Spleen (tissue), 13 donors: ENCODE measurements at regions of chr1 and their contacts with region 1.

Region 1: DNA sequence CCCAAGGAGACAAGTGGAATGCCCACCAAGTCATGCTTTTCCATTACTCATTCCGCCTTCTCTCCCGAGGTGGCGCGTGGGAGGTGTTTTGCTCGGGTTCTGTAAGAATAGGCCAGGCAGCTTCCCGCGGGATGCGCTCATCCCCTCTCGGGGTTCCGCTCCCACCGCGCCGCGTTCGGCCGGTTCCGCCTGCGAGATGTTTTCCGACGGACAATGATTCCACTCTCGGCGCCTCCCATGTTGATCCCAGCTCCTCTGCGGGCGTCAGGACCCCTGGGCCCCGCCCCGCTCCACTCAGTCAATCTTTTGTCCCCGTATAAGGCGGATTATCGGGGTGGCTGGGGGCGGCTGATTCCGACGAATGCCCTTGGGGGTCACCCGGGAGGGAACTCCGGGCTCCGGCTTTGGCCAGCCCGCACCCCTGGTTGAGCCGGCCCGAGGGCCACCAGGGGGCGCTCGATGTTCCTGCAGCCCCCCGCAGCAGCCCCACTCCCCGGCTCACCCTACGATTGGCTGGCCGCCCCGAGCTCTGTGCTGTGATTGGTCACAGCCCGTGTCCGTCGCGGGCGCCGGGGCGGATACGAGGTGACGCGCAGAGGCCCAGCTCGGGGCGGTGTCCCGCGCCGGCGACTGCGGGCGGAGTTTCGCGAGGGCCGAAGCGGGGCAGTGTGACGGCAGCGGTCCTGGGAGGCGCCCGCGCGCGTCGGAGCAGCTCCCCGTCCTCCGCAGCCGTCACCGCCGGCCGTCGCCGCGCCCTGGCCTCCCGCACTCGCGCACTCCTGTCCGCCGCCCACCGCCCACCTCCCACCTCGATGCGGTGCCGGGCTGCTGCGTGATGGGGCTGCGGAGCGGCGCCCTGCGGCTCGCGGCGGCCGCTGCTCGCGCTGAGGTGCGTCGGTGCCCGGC is at the start of gene KIF1B:
- DNase-seq: peak; percentile 98
- H3K4me3 ChIP-seq: peak within 1 kb of the TSS; percentile 53 to 81 (median 70)
- H3K27ac ChIP-seq: peak within 1 kb of the TSS; percentile 87 to 98 (median 95)
- H3K4me1 ChIP-seq: peaks cover 6 to 52% (median 33%) of the 10 kb centered on the region in 6 donors
- H3K27me3 ChIP-seq: peaks cover 0 to 6% (median 0%) of the 10 kb centered on the region in 7 donors
- CTCF ChIP-seq: peak; percentile 93 to 100 (median 99)
- POLR2A ChIP-seq: peak in 2 of 3 donors; percentile 71 to 95
- total RNA-seq, gene KIF1B: 29.9 to 53.5 (median 37.4) TPM

Region 2: DNA sequence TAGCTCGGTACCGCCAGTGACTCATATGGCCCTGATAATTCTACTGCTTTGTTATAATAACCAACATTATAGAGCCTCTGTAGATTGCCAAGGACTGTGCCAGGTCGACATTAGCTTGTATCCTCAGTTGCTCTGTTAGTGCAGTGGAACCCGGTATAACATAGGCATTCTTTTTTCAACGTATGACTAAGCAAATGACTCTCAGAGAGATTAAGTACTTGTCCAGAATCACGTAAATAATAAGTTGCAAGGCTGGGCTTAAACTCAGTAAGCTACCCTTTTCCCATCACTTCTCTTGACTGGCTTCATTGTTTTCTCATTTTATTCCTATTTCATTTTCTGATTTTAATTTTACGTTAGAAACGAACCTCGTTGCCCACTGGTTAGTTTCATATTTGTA is 92.3 kb before region 1 on chr1:
- intact Hi-C with region 1: no loop called
- DNase-seq: no peak
- H3K4me3 ChIP-seq: no peak overlapping the region
- H3K27ac ChIP-seq: no peak overlapping the region
- H3K4me1 ChIP-seq: no peaks in the 10 kb centered on the region
- H3K27me3 ChIP-seq: no peaks in the 10 kb centered on the region
- CTCF ChIP-seq: no peak
- POLR2A ChIP-seq: no peak

Region 3: GRCh38 chr1:10339815-10340214 is 129.7 kb after region 1 on chr1:
- intact Hi-C with region 1: loop called (anchors 10 kb)
- DNase-seq: no peak
- H3K4me3 ChIP-seq: no peak overlapping the region
- H3K27ac ChIP-seq: no peak overlapping the region
- H3K4me1 ChIP-seq: peaks cover 0 to 9% (median 0%) of the 10 kb centered on the region in 6 donors
- H3K27me3 ChIP-seq: no peaks in the 10 kb centered on the region
- CTCF ChIP-seq: no peak
- POLR2A ChIP-seq: no peak

Region 4: DNA sequence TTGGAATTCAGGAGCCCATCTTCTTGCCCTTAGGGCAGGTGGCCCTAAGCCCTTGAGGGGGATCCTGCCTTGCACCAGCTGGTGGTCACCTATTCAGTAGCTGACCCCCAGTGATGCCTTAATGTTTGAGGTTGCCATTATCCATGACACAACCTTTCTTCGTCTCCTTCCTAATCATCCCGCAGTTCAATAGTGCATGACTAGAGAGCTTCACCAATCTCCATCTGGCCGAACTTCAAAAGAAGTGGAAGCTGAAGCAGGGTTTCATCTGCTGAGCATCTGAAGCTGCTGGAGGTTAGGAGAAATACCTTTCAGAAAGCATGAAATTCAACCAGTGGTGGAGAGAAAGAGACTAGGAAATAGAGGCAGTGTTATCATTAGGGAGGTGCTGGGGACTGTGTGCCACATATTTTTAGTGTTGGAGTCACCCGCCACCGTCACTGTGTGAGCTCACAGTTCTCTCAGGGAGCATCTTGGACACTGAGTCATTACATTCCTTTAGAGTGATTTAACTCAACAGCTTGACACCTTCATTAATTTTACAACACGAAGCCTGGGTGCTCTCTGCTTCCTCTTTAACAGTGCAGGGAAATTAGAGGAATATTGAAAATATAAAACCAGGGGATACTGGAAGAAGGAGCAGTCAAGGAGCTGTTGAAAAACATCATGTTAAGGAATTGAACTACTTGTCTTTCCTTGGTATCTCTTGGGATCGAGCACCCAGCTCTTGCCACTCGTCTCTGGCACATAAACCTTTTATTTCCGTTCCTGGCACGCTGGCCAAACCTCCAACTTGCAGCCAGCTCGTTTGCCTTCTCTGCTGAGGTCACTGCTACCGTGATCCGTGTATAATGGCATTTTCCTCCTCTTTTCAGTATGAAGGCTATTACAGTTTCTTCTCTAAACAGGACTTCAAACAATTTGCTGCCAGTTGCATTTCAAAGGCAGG is 318.2 kb after region 1 on chr1:
- intact Hi-C with region 1: no loop called
- DNase-seq: no peak
- H3K4me3 ChIP-seq: no peak overlapping the region
- H3K27ac ChIP-seq: no peak overlapping the region
- H3K4me1 ChIP-seq: peaks cover 9 to 37% (median 16%) of the 10 kb centered on the region in 6 donors
- H3K27me3 ChIP-seq: no peaks in the 10 kb centered on the region
- CTCF ChIP-seq: no peak
- POLR2A ChIP-seq: no peak